Sciatic nerve (tissue), 2 donors: ENCODE measurements at regions of chr7 and their contacts with region 1.

Region 1: DNA sequence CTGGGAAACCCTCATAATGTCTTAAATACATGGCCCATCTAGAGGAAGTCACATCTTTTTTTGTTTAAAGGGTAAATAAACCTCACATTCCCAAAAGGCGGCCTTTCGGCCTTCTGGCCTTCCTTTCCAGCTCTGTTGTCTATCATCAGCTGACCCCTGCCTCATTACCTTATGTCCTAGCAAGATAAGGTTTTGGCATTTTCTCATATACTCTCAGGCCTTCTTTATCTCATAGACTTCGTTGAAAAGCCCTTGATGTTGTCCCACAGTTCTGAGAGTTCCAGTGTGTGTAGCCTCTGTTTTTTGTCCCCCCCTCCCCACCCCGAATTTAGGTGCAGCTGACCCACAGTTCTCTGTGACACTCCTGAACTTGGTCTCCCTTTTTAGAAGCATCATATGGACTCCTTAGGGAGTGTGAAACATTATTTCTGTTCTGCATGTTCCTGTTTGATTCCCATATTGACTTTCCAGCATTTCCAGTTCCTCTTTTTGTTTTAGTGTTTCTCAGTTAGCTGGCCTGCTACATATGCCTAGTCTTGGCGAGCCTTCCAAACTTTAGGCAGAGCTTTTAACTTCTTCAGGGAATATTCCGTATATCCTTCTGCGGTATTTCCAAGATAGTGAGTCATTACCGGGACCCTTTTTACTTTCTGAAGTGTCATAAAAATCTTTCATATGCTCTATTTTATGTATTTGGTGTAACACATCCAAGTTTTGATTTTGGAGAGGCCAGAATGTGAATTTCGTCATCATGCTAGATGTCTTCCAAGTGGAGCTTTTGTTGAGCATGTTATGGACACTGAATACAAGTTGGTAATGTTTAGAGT is 138.5 kb downstream of the LRRC4 start:
- DNase-seq: no peak
- ATAC-seq: no peak

Region 2: GRCh38 chr7:127733986-127734385 is 158.7 kb before region 1 on chr7:
- intact Hi-C with region 1: no loop called
- DNase-seq: no peak
- ATAC-seq: no peak

Region 3: DNA sequence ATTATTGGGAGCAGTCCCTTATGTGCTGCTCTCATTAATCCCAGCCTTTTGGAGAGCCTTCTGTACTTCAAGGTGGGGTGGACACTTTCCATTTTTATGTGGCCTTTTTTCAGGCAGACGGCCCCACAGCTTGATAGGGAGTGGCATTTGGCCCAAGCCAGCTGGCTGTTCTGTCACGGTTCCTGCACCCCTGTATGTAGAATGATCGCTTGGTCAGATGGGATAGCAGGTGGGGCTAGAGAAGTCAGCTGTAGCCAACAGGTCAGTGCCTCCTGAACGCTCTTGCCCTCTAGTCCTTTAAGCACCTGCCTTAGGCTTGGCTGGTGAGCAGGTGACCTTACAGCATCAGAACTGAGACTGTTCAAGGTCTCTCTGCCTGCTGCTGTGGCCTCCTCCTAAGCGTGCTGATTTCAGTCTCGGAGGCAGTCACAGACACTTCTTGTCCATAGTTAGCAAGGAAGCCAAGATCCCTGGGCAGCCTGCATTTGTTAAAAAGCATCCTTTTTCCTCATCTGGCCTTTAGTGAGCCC is 43.2 kb after region 1 on chr7:
- intact Hi-C with region 1: loop called (anchors 2 kb)
- DNase-seq: no peak
- ATAC-seq: no peak

Region 4: DNA sequence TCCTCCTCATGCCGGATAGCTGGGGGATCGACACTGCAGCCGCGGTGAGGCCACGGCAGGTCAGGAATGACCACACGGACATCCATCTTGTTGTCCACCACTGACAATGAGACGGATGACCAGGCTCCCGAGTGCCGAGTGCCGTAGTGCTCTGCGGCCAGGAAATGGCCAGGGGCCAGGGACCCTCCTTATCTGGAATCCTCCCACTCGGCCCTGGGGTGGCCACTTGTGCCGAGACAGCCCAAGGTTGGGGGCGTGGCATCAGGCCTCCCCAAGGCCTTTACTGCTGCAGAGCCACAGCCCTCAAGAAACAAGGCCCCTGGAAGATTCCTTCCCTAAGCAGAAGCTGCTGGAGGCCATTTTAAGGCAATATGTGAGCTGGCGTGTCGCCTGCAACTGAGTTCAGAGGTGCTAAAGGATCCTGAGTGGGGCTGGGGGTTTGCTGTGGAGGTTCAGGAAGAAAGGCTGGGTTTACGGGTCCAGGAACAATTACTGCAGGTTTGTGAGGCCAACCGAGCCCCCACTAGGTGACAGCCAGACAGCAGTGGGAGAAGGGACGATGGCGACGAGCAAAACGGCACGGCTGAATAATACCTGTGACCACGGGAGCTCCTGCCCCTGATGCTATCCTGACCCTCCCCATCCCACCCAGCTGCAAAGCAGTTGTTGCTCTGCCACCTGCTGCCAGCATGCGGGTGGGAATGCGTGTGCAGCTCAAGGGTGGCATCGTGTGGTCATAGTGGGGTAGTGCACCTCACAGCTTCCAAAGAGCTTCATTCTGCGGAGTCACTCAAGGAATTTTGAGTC is 316.7 kb after region 1 on chr7:
- intact Hi-C with region 1: no loop called
- DNase-seq: peak; percentile 80
- ATAC-seq: peak; percentile 85